CD8-positive, alpha-beta T cell (primary cell): ENCODE measurements at regions of chr22 and their contacts with region 1.

Region 1: GRCh38 chr22:40533712-40534378 is 102.7 kb downstream of the MRTFA start:
- DNase-seq: peak; percentile 6 to 86 (median 58)
- ATAC-seq: peak; percentile 98
- H3K4me3 ChIP-seq: peak overlapping the region; percentile 46 to 48
- H3K4me3 Mint-ChIP-seq: peak overlapping the region; percentile 82
- H3K27ac ChIP-seq: peak overlapping the region; percentile 19 to 63
- H3K27ac Mint-ChIP-seq: peak overlapping the region; percentile 87
- H3K4me1 ChIP-seq: peaks cover 41% of the 10 kb centered on the region
- H3K4me1 Mint-ChIP-seq: peaks cover 63% of the 10 kb centered on the region
- H3K27me3 ChIP-seq: no peaks in the 10 kb centered on the region
- H3K27me3 Mint-ChIP-seq: no peaks in the 10 kb centered on the region
- CTCF ChIP-seq: no peak

Region 2: GRCh38 chr22:39021552-39022250 is 1512.1 kb before region 1 on chr22:
- CTCF ChIA-PET with region 1: no interaction called
- POLR2A ChIA-PET with region 1: no interaction called
- intact Hi-C with region 1: no loop called
- DNase-seq: peak in 1 of 9 experiments; percentile 51
- ATAC-seq: no peak
- H3K4me3 ChIP-seq: peak overlapping the region; percentile 69 to 76
- H3K4me3 Mint-ChIP-seq: peak overlapping the region; percentile 94
- H3K27ac ChIP-seq: peak overlapping the region; percentile 59 to 84
- H3K27ac Mint-ChIP-seq: peak overlapping the region; percentile 97
- H3K4me1 ChIP-seq: peaks cover 38% of the 10 kb centered on the region
- H3K4me1 Mint-ChIP-seq: peaks cover 61% of the 10 kb centered on the region
- H3K27me3 ChIP-seq: no peaks in the 10 kb centered on the region
- H3K27me3 Mint-ChIP-seq: no peaks in the 10 kb centered on the region
- CTCF ChIP-seq: no peak

Region 3: GRCh38 chr22:40519284-40519947 is 14.4 kb before region 1 on chr22:
- CTCF ChIA-PET with region 1: interaction called, 21 read pairs
- POLR2A ChIA-PET with region 1: interaction called, 6 read pairs
- intact Hi-C with region 1: loop called in 1 of 2 experiments (anchors 2 kb)
- DNase-seq: peak in 2 of 9 experiments; percentile 46 to 66
- ATAC-seq: peak; percentile 93
- H3K4me3 ChIP-seq: peak overlapping the region; percentile 18 to 25
- H3K4me3 Mint-ChIP-seq: peak overlapping the region; percentile 74
- H3K27ac ChIP-seq: peak overlapping the region; percentile 30 to 68
- H3K27ac Mint-ChIP-seq: peak overlapping the region; percentile 91
- H3K4me1 ChIP-seq: peaks cover 19% of the 10 kb centered on the region
- H3K4me1 Mint-ChIP-seq: peaks cover 32% of the 10 kb centered on the region
- H3K27me3 ChIP-seq: no peaks in the 10 kb centered on the region
- H3K27me3 Mint-ChIP-seq: no peaks in the 10 kb centered on the region
- CTCF ChIP-seq: no peak

Region 4: GRCh38 chr22:40612291-40612740 is 78.5 kb after region 1 on chr22:
- CTCF ChIA-PET with region 1: no interaction called
- POLR2A ChIA-PET with region 1: no interaction called
- intact Hi-C with region 1: no loop called
- DNase-seq: no peak
- ATAC-seq: no peak
- H3K4me3 ChIP-seq: no peak overlapping the region
- H3K4me3 Mint-ChIP-seq: no peak overlapping the region
- H3K27ac ChIP-seq: no peak overlapping the region
- H3K27ac Mint-ChIP-seq: peak overlapping the region; percentile 0
- H3K4me1 ChIP-seq: peaks cover 4% of the 10 kb centered on the region
- H3K4me1 Mint-ChIP-seq: peaks cover 43% of the 10 kb centered on the region
- H3K27me3 ChIP-seq: no peaks in the 10 kb centered on the region
- H3K27me3 Mint-ChIP-seq: no peaks in the 10 kb centered on the region
- CTCF ChIP-seq: no peak

Region 5: GRCh38 chr22:40636380-40637182 is 102.7 kb after region 1 on chr22 and contains the start of gene MRTFA:
- CTCF ChIA-PET with region 1: interaction called, 4 read pairs
- POLR2A ChIA-PET with region 1: interaction called, 7 read pairs
- intact Hi-C with region 1: loop called in 1 of 2 experiments (anchors 2 kb)
- DNase-seq: peak; percentile 98 to 100 (median 99)
- ATAC-seq: peak; percentile 93
- H3K4me3 ChIP-seq: peak within 1 kb of the TSS; percentile 98 to 100
- H3K4me3 Mint-ChIP-seq: peak within 1 kb of the TSS; percentile 99
- H3K27ac ChIP-seq: peak within 1 kb of the TSS; percentile 89
- H3K27ac Mint-ChIP-seq: peak within 1 kb of the TSS; percentile 98
- H3K4me1 ChIP-seq: peaks cover 34% of the 10 kb centered on the region
- H3K4me1 Mint-ChIP-seq: peaks cover 45% of the 10 kb centered on the region
- H3K27me3 ChIP-seq: no peaks in the 10 kb centered on the region
- H3K27me3 Mint-ChIP-seq: no peaks in the 10 kb centered on the region
- CTCF ChIP-seq: no peak
- total RNA-seq, gene MRTFA: 53.7 to 56.7 TPM